Transverse colon (tissue), 4 donors: ENCODE measurements at regions of chr7 and their contacts with region 1.

Region 1: GRCh38 chr7:92447345-92448204 is at the start of gene GATAD1:
- DNase-seq: peak; percentile 93
- H3K4me3 ChIP-seq: peak within 1 kb of the TSS; percentile 91 to 99 (median 98)
- H3K27ac ChIP-seq: peak within 1 kb of the TSS; percentile 99
- H3K4me1 ChIP-seq: peaks cover 0 to 18% (median 9%) of the 10 kb centered on the region in 4 donors
- H3K27me3 ChIP-seq: no peaks in the 10 kb centered on the region
- CTCF ChIP-seq: peak; percentile 1 to 98 (median 93)
- EP300 ChIP-seq: no peak
- POLR2A ChIP-seq: peak; percentile 87
- total RNA-seq, gene GATAD1: 18.9 to 57.0 (median 41.7) TPM

Region 2: DNA sequence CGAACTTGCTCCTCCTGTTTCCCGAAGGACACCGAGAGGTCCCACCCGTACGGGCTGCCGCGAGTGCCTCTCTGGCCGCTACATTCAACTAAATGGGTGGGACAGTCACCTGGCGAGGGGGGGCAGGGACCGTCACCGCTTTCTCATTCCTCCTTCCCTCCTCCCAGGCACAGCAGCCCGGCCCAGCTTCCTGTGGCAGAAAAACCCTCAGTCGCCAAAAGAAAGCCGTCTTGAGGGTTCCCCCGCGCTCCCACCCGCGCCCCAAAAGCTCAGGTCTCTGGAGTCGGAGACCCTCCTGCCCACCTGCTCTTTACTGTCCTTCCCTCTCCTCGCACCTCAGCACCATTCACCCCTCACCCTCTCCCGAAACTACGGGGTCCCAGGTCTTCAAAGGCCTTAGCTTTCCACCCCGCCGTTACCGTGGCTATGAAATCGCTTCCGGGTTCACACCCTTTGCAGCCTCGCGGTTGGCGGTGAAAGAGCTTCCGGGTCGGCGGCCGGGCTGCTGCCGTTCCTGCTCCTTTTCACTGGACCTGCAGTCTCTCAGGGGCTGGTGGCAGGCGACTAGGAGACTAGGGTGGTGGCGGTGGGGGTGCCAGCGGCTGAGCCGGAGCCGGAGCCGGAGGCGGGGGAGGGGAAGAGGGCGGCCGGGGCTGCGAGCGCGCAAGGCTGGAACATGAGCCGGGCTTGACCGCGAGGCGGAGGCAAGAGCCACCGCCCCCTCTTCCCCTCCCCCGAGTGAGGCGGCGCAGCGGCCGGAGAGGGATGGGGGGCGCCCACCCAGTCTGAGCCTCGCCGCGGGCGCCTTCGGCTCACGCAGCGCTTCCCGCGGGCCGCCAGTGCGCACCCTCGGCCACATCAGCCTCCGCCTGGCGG is 201.8 kb before region 1 on chr7 and contains the starts of genes ANKIB1 and KRIT1:
- in situ Hi-C with region 1: loop called in 2 of 4 experiments (anchors 25 kb)
- intact Hi-C with region 1: loop called (anchors 5 kb)
- DNase-seq: peak; percentile 90
- H3K4me3 ChIP-seq: peak within 1 kb of the TSS; percentile 81 to 91 (median 87)
- H3K27ac ChIP-seq: peak within 1 kb of the TSS; percentile 89 to 99 (median 94)
- H3K4me1 ChIP-seq: peaks cover 13 to 40% (median 27%) of the 10 kb centered on the region in 4 donors
- H3K27me3 ChIP-seq: no peaks in the 10 kb centered on the region
- CTCF ChIP-seq: peak in 2 of 5 experiments; percentile 24 to 29
- EP300 ChIP-seq: no peak
- POLR2A ChIP-seq: peak; percentile 76
- total RNA-seq, gene ANKIB1: 29.9 to 45.9 (median 38.5) TPM
- total RNA-seq, gene KRIT1: 29.9 to 95.7 (median 65.5) TPM